Mammary epithelial cell (primary cell): ENCODE measurements at regions of chrX and their contacts with region 1.

Region 1: DNA sequence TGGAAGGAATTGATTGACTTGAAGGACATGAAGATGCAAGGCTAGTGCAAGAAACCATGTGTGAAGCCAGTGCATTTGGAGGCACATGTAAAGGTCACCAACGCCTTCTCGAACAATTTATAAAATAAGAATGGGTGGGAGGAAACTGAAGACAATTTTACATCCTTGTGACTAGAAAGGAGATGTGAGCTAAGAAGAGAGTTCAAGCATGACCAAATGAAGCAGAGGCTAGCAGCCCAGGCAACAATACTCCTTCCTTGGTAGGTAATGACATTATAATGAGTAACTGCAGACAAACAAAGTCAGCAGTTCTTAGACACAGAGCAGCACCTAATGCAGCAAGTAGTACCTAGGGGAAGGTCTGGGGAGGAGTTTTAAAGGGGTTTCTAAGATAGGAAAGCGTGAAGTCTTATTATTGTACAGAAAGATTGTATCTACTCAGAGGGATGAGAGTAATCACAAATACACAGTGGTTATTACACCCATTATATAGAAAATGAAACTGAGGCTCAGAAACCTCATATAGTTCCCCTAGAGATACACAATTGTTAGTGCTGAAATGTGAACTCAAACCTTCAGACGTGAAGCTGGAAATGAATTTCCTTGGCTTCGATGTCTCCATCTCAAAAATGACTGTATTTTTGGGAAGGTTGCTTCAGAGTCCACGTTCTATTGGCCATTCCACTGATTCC is 56.1 kb downstream of the ATXN3L start:
- DNase-seq: no peak
- H3K4me3 ChIP-seq: no peak overlapping the region
- H3K27ac ChIP-seq: no peak overlapping the region
- H3K4me1 ChIP-seq: peaks cover 13% of the 10 kb centered on the region
- H3K27me3 ChIP-seq: no peaks in the 10 kb centered on the region
- CTCF ChIP-seq: no peak

Region 2: DNA sequence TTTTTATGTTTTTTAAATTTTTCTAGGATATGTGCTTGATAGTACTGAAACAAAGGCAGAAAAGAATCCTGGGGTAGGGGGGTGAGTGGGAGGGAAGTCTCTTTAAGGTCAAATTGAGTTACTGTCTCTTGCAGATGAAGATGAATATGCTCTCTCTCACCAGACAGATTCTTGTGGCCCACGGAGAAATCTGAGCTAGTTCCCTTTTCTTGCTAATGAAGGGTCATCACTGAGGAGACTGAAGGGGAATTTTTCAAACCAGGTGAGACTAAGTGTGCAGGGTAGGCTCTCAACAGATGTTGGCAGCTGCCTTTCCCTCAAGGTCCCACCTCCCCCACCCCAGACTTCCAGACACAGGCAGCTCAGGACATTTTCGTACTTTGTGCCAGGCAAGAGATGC is 240.8 kb before region 1 on chrX:
- CTCF ChIA-PET with region 1: no interaction called
- dilution Hi-C with region 1: no loop called
- in situ Hi-C with region 1: no loop called
- intact Hi-C with region 1: no loop called
- DNase-seq: no peak
- H3K4me3 ChIP-seq: no peak overlapping the region
- H3K27ac ChIP-seq: no peak overlapping the region
- H3K4me1 ChIP-seq: no peaks in the 10 kb centered on the region
- H3K27me3 ChIP-seq: no peaks in the 10 kb centered on the region
- CTCF ChIP-seq: no peak

Region 3: DNA sequence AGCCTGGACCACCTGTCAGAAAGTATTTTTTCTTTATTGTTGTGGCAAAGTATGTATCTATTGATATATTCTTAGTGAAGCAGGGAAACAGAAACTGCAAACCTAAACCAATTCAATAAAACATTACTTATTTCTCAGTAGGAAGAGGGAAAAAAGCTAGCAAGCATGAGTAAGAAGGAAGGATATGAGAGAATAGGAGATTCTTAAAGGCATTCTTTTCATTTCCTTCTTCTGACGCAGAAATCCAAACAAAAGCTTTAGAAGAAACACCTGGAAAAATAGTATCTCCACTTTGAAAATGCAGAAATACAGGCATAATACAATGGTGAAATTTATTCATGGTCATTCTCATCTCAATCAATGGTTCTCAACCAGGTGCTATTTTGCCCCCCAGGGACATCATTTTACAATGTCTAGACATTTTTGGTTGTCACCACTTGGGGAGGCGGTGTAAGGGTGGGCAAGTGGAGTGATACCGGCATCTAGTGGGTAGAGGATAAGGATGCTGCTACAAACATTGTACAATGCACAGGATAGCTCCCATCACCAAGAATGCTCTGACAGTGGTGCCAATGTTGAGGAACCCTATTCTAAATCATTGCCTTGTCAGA is 77.9 kb after region 1 on chrX:
- CTCF ChIA-PET with region 1: no interaction called
- dilution Hi-C with region 1: loop called (anchors 5 kb)
- in situ Hi-C with region 1: no loop called
- intact Hi-C with region 1: no loop called
- DNase-seq: no peak
- H3K4me3 ChIP-seq: no peak overlapping the region
- H3K27ac ChIP-seq: no peak overlapping the region
- H3K4me1 ChIP-seq: peaks cover 9% of the 10 kb centered on the region
- H3K27me3 ChIP-seq: no peaks in the 10 kb centered on the region
- CTCF ChIP-seq: no peak